ENCODE measurements at regions of chr19 and their contacts with region 1.

Region 1: DNA sequence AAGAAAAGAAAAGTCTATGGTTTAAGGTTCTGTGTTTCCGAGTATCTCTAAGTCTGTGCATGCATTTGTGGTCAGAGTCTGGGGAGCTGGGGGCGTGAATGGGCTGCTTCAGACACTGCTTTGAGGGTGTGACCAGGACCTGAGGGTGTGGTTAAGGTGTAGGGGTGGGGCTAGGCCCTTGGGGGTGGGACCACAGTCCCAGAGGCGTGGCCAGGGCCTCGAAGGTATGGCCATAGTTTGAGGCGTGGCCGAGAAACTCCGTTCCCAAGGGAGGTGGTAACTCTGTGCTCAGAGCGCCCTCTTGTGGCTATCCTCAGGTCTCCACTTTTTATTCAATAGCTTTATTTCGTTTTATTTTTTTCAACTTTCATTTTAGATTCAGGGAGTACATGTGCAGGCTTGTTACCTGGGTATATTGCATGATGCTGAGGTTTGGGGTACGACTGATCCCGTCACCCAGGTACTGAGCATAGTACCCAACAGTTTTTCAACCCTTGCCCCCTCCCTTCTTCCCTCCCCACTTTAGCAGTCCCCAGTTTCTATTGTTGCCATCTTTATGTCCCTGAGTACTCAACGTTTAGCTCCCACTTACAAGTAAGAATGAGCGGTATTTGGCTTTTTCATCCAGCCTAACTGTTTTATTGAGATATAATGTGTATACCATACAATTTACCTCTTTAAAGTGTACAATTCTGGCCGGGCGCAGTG is 7.0 kb upstream of the CBLC start:
- DNase-seq: peak; percentile 95
- H3K4me3 ChIP-seq: no peak overlapping the region
- H3K27ac ChIP-seq: no peak overlapping the region
- H3K4me1 ChIP-seq: peaks cover 12% of the 10 kb centered on the region
- H3K27me3 ChIP-seq: no peaks in the 10 kb centered on the region
- CTCF ChIP-seq: peak; percentile 67 to 73
- POLR2A ChIP-seq: no peak

Region 2: GRCh38 chr19:44582581-44583265 is 188.0 kb before region 1 on chr19:
- CTCF ChIA-PET with region 1: interaction called, 18 read pairs
- POLR2A ChIA-PET with region 1: no interaction called
- dilution Hi-C with region 1: no loop called
- intact Hi-C with region 1: no loop called
- DNase-seq: no peak
- H3K4me3 ChIP-seq: no peak overlapping the region
- H3K27ac ChIP-seq: no peak overlapping the region
- H3K4me1 ChIP-seq: peaks cover 24% of the 10 kb centered on the region
- H3K27me3 ChIP-seq: no peaks in the 10 kb centered on the region
- CTCF ChIP-seq: peak; percentile 74 to 83
- POLR2A ChIP-seq: no peak

Region 3: DNA sequence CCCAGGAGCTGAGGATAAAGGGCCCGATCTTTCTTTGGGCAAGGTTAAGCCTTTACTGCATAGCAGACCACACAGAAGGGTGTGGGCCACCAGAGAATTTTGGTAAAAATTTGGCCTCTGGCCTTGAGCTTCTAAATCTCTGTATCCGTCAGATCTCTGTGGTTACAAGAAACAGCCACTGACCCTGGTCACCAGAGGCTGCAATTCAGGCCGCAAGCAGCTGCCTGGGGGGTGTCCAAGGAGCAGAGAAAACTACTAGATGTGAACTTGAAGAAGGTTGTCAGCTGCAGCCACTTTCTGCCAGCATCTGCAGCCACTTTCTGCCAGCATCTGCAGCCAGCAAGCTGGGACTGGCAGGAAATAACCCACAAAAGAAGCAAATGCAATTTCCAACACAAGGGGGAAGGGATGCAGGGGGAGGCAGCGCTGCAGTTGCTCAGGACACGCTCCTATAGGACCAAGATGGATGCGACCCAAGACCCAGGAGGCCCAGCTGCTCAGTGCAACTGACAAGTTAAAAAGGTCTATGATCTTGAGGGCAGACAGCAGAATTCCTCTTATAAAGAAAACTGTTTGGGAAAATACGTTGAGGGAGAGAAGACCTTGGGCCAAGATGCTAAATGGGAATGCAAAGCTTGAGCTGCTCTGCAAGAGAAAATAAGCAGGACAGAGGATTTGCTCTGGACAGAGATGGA is 107.9 kb before region 1 on chr19:
- CTCF ChIA-PET with region 1: interaction called, 23 read pairs
- POLR2A ChIA-PET with region 1: interaction called, 5 read pairs
- dilution Hi-C with region 1: no loop called
- intact Hi-C with region 1: no loop called
- DNase-seq: no peak
- H3K4me3 ChIP-seq: no peak overlapping the region
- H3K27ac ChIP-seq: no peak overlapping the region
- H3K4me1 ChIP-seq: no peaks in the 10 kb centered on the region
- H3K27me3 ChIP-seq: no peaks in the 10 kb centered on the region
- CTCF ChIP-seq: no peak
- POLR2A ChIP-seq: no peak

Region 4: GRCh38 chr19:44723952-44724319 is 46.8 kb before region 1 on chr19:
- CTCF ChIA-PET with region 1: interaction called, 688 read pairs
- POLR2A ChIA-PET with region 1: interaction called, 5 read pairs
- dilution Hi-C with region 1: no loop called
- intact Hi-C with region 1: loop called (anchors 1 kb)
- DNase-seq: peak; percentile 81
- H3K4me3 ChIP-seq: no peak overlapping the region
- H3K27ac ChIP-seq: no peak overlapping the region
- H3K4me1 ChIP-seq: peaks cover 36% of the 10 kb centered on the region
- H3K27me3 ChIP-seq: no peaks in the 10 kb centered on the region
- CTCF ChIP-seq: peak; percentile 90 to 98
- POLR2A ChIP-seq: no peak

Region 5: DNA sequence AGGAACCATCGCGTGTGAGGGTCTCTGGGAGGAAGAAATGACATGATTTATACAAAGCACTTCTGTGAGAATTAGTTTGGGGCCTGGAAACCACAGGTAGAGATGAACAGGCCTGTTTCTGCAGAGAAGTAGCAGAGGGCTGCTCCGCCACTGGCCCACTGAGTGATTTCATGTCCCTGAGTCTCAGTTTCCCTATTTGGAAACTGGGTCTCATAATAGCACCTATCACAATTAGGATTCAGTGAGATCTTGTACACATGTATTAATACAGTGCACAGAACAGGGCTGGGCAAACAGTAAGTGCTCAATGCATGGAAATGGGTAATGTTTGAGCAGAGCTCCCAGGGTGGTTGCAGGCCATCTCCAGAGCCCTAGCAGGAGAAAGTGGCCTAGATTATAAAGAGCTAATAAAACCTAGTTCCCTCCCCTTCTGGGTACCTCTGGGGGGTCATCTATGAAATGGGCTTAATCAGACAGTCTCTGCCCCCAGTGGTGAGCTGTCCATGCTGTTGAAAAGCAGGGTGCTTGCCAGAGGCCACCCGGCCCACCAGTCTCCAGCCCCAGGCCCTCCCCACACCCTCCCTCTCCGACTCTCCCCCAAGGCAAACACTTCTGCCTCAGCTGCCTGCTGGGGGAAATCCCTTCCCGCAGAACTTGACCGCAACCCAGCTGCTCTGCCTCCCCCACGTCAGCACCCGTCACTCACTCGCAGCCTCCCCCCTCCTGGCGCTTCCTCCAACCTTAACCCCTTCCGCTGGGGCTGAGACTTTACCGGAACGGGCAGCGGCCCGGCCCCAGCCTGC is 17.7 kb before region 1 on chr19:
- CTCF ChIA-PET with region 1: interaction called, 44 read pairs
- POLR2A ChIA-PET with region 1: no interaction called
- dilution Hi-C with region 1: no loop called
- intact Hi-C with region 1: no loop called
- DNase-seq: peak; percentile 91
- H3K4me3 ChIP-seq: peak overlapping the region in 1 of 3 experiments; percentile 17
- H3K27ac ChIP-seq: peak overlapping the region; percentile 86
- H3K4me1 ChIP-seq: peaks cover 44% of the 10 kb centered on the region
- H3K27me3 ChIP-seq: no peaks in the 10 kb centered on the region
- CTCF ChIP-seq: no peak
- POLR2A ChIP-seq: peak; percentile 40

Region 6: GRCh38 chr19:44845612-44846454 is 75.1 kb after region 1 on chr19 and contains the start of gene NECTIN2:
- CTCF ChIA-PET with region 1: interaction called, 13 read pairs
- POLR2A ChIA-PET with region 1: no interaction called
- dilution Hi-C with region 1: no loop called
- intact Hi-C with region 1: loop called (anchors 1 kb)
- DNase-seq: peak; percentile 99
- H3K4me3 ChIP-seq: peak within 1 kb of the TSS; percentile 69 to 96 (median 83)
- H3K27ac ChIP-seq: peak within 1 kb of the TSS; percentile 99
- H3K4me1 ChIP-seq: peaks cover 35% of the 10 kb centered on the region
- H3K27me3 ChIP-seq: no peaks in the 10 kb centered on the region
- CTCF ChIP-seq: peak; percentile 83 to 85
- POLR2A ChIP-seq: peak; percentile 76
- total RNA-seq, gene NECTIN2: 205 and 211 TPM in 2 replicates

Measured in endothelial cell of umbilical vein (primary cell).